ENCODE measurements at regions of chr2 and their contacts with region 1.

Region 1: GRCh38 chr2:201158111-201158929 is 24.6 kb upstream of the CASP10 start:
- DNase-seq: peak; percentile 21 to 83 (median 65)
- ATAC-seq: peak; percentile 93
- H3K4me3 ChIP-seq: no peak overlapping the region
- H3K4me3 Mint-ChIP-seq: no peak overlapping the region
- H3K27ac ChIP-seq: peak overlapping the region in 1 of 2 experiments; percentile 68
- H3K27ac Mint-ChIP-seq: peak overlapping the region; percentile 83
- H3K4me1 ChIP-seq: peaks cover 11% of the 10 kb centered on the region
- H3K4me1 Mint-ChIP-seq: peaks cover 18% of the 10 kb centered on the region
- H3K27me3 ChIP-seq: no peaks in the 10 kb centered on the region
- H3K27me3 Mint-ChIP-seq: no peaks in the 10 kb centered on the region
- CTCF ChIP-seq: peak; percentile 54

Region 2: DNA sequence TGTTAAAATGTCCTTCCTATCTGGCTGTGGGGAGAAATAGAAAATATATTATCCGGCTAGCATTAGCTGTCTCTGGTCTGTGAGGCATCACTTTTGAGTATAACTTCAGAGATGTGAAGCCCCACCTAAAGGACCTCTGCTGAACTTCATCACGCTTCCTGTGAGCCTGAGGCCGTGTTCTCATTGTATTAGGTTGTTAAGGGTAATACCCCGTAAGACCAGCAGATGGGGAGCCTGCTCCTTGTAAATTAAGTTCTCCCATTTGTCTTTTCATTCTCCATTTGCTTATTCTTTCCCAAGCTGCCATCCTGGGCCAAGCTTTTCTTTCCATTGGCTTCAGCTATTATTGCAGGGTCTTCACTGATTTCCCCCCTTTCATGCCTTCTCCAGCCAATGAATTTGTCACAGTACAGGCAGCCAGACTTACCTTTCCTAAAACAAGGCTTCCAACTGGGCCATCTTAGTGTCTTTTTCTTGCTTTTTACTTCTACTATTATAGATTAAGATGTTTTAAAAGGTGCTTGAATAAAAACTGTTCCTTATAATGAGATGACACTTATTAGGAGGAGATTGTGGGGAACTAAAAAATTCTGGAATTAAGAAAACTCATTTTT is 256.8 kb before region 1 on chr2:
- CTCF ChIA-PET with region 1: interaction called, 4 read pairs
- POLR2A ChIA-PET with region 1: no interaction called
- intact Hi-C with region 1: loop called (anchors 1 to 5 kb)
- DNase-seq: peak; percentile 36 to 92 (median 73)
- ATAC-seq: peak; percentile 100
- H3K4me3 ChIP-seq: no peak overlapping the region
- H3K4me3 Mint-ChIP-seq: no peak overlapping the region
- H3K27ac ChIP-seq: peak overlapping the region in 1 of 2 experiments; percentile 4
- H3K27ac Mint-ChIP-seq: peak overlapping the region; percentile 45
- H3K4me1 ChIP-seq: peaks cover 4% of the 10 kb centered on the region
- H3K4me1 Mint-ChIP-seq: peaks cover 7% of the 10 kb centered on the region
- H3K27me3 ChIP-seq: no peaks in the 10 kb centered on the region
- H3K27me3 Mint-ChIP-seq: no peaks in the 10 kb centered on the region
- CTCF ChIP-seq: peak; percentile 84

Region 3: GRCh38 chr2:201144101-201145051 is 13.9 kb before region 1 on chr2:
- CTCF ChIA-PET with region 1: interaction called, 20 read pairs
- POLR2A ChIA-PET with region 1: interaction called, 6 read pairs
- intact Hi-C with region 1: no loop called
- DNase-seq: no peak
- ATAC-seq: no peak
- H3K4me3 ChIP-seq: no peak overlapping the region
- H3K4me3 Mint-ChIP-seq: no peak overlapping the region
- H3K27ac ChIP-seq: no peak overlapping the region
- H3K27ac Mint-ChIP-seq: no peak overlapping the region
- H3K4me1 ChIP-seq: no peaks in the 10 kb centered on the region
- H3K4me1 Mint-ChIP-seq: peaks cover 4% of the 10 kb centered on the region
- H3K27me3 ChIP-seq: no peaks in the 10 kb centered on the region
- H3K27me3 Mint-ChIP-seq: no peaks in the 10 kb centered on the region
- CTCF ChIP-seq: no peak

Region 4: DNA sequence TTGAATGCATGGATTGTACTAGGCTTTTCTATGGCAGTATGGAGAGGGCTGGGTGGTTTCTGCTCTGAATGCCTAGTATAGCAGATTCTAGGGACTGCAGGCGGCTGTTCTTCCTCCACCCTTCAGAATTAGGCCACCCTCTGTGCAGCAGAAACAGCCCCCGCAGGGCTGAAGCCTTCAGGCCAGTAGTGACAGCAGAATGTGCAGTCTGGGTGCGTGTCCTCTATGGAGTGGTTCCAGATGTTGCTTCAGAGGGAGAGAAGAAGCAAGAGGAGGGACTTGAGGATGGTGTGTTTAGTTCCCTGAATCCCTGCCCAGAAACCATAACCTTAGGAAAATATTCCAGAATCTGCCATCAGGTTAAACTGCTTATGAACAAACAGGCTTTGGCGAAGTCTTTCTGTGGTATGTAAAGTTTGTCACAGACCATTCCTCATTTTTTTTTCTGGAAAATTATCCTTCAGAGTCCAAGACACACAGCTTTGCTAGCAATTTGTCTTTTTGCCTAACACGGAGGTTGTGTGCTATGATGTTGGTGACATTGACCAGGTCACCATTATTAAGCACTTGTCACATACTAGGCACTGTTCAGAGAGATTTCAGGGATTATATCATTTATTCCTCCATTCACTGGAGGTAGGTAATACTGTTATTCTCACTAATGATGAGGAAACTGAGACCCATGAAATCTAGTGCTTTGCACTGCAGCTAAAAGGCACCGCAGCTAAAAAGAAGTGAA is 45.8 kb after region 1 on chr2:
- CTCF ChIA-PET with region 1: no interaction called
- POLR2A ChIA-PET with region 1: no interaction called
- intact Hi-C with region 1: no loop called
- DNase-seq: no peak
- ATAC-seq: no peak
- H3K4me3 ChIP-seq: no peak overlapping the region
- H3K4me3 Mint-ChIP-seq: no peak overlapping the region
- H3K27ac ChIP-seq: no peak overlapping the region
- H3K27ac Mint-ChIP-seq: no peak overlapping the region
- H3K4me1 ChIP-seq: peaks cover 9% of the 10 kb centered on the region
- H3K4me1 Mint-ChIP-seq: peaks cover 35% of the 10 kb centered on the region
- H3K27me3 ChIP-seq: no peaks in the 10 kb centered on the region
- H3K27me3 Mint-ChIP-seq: no peaks in the 10 kb centered on the region
- CTCF ChIP-seq: no peak

Region 5: DNA sequence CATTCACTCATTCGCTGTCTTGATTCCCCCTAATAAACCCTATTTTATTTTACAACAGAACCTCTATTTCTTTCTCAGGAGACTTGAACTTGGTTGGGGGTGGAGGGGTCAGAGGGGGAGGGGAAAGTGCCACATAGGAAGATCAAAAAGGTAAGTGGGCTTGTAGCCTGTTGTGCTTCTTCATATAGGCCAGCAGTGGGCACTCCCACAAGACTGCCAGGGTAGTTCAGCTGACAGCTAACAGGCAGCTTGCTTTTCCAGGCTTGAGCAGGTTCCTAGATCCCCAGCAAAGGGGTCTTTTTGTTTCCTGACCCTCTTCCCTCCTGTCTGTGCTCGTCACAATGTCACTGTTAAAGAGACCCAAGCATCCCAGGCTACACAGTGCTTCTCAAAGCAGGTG is 913.9 kb after region 1 on chr2:
- CTCF ChIA-PET with region 1: no interaction called
- POLR2A ChIA-PET with region 1: no interaction called
- intact Hi-C with region 1: no loop called
- DNase-seq: no peak
- ATAC-seq: no peak
- H3K4me3 ChIP-seq: no peak overlapping the region
- H3K4me3 Mint-ChIP-seq: no peak overlapping the region
- H3K27ac ChIP-seq: no peak overlapping the region
- H3K27ac Mint-ChIP-seq: no peak overlapping the region
- H3K4me1 ChIP-seq: no peaks in the 10 kb centered on the region
- H3K4me1 Mint-ChIP-seq: no peaks in the 10 kb centered on the region
- H3K27me3 ChIP-seq: no peaks in the 10 kb centered on the region
- H3K27me3 Mint-ChIP-seq: peaks cover 10% of the 10 kb centered on the region
- CTCF ChIP-seq: no peak

Region 6: GRCh38 chr2:202265467-202266277 is 1107.4 kb after region 1 on chr2 and contains the start of gene NOP58:
- CTCF ChIA-PET with region 1: no interaction called
- POLR2A ChIA-PET with region 1: no interaction called
- intact Hi-C with region 1: no loop called
- DNase-seq: peak; percentile 80 to 97 (median 87)
- ATAC-seq: peak; percentile 75
- H3K4me3 ChIP-seq: peak within 1 kb of the TSS; percentile 80 to 100
- H3K4me3 Mint-ChIP-seq: peak within 1 kb of the TSS; percentile 52
- H3K27ac ChIP-seq: peak within 1 kb of the TSS; percentile 97 to 98
- H3K27ac Mint-ChIP-seq: peak within 1 kb of the TSS; percentile 43
- H3K4me1 ChIP-seq: peaks cover 18% of the 10 kb centered on the region
- H3K4me1 Mint-ChIP-seq: peaks cover 21% of the 10 kb centered on the region
- H3K27me3 ChIP-seq: no peaks in the 10 kb centered on the region
- H3K27me3 Mint-ChIP-seq: no peaks in the 10 kb centered on the region
- CTCF ChIP-seq: no peak
- total RNA-seq, gene NOP58: 345 to 352 TPM